PC-3 (cell line): ENCODE measurements at regions of chr18 and their contacts with region 1.

Region 1: DNA sequence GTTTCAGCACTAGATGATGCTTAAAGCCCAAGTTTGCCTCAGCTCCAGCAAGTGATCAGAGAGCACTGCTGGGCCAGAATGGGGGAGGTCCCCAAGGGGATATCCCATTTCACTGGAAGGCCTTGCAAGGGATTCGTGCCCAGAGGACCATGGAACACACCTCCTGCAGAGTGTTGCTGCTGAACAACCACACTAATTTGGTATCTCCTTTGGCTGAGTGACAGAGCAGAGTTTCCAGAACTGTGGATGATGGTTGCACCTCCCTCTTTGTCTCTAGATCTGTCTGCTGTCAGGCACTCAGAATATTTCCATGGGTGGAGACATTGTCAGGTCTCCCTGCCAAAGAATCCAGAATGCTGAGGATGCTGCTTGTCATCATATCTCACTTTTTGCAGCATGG is 484.8 kb upstream of the NETO1 start:
- DNase-seq: no peak
- ATAC-seq: peak; percentile 9; the same call in 1 of the 2 replicates
- H3K4me3 ChIP-seq: no peak overlapping the region
- H3K27ac ChIP-seq: no peak overlapping the region
- H3K4me1 ChIP-seq: 0 out of 2 replicates have a peak, but pooled peaks cover 5% of the 10 kb centered on the region
- H3K27me3 ChIP-seq: no peaks in the 10 kb centered on the region
- CTCF ChIP-seq: no peak

Region 2: GRCh38 chr18:72762515-72763122 is 589.9 kb before region 1 on chr18:
- CTCF ChIA-PET with region 1: no interaction called
- POLR2A ChIA-PET with region 1: no interaction called
- intact Hi-C with region 1: loop called (anchors 5 kb)
- DNase-seq: peak; percentile 84
- ATAC-seq: peak; percentile 61
- H3K4me3 ChIP-seq: no peak overlapping the region
- H3K27ac ChIP-seq: no peak overlapping the region
- H3K4me1 ChIP-seq: no peaks in the 10 kb centered on the region
- H3K27me3 ChIP-seq: no peaks in the 10 kb centered on the region
- CTCF ChIP-seq: peak; percentile 83

Region 3: DNA sequence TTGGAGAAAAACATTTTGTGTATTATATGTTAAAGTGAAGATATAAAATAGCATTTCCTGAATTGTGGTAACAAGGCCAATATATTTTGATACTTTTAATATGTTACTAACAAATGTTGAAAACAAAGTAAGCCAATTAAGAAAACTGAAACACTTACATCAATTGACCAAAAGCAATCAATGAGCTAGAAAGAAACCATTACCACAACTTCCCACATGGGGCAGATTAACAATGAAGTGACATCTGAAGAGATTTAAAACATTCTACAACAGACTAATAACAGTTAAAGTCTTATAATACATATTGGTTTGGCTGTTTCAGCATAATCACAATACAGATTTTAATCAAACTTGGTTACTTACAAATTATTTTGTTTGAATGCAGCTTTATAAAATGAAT is 202.3 kb before region 1 on chr18:
- CTCF ChIA-PET with region 1: no interaction called
- POLR2A ChIA-PET with region 1: no interaction called
- intact Hi-C with region 1: no loop called
- DNase-seq: peak; percentile 21
- ATAC-seq: no peak
- H3K4me3 ChIP-seq: no peak overlapping the region
- H3K27ac ChIP-seq: no peak overlapping the region
- H3K4me1 ChIP-seq: peaks cover 4% of the 10 kb centered on the region; the same call in 1 of the 2 replicates
- H3K27me3 ChIP-seq: no peaks in the 10 kb centered on the region
- CTCF ChIP-seq: peak; percentile 48

Region 4: DNA sequence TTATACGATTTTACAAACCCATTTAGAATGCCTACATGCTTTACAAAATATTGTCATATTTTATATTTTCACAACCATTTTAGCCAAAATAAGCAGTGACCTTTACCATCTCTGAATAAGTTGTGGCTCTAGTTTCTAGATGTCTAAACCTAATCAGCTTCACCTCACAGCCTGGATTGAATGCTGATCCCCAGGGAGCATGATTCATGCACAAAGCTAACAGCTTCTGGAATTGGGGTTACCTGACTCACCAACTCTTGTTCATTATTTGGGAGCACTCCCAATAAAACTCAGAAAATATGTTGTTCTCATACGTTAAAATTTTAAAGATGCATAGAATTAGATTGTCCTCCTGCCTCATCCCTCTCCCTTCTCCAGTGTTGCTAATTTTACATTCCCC is 126.9 kb after region 1 on chr18:
- CTCF ChIA-PET with region 1: no interaction called
- POLR2A ChIA-PET with region 1: no interaction called
- intact Hi-C with region 1: no loop called
- DNase-seq: peak; percentile 13
- ATAC-seq: peak; percentile 51; the same call in 1 of the 2 replicates
- H3K4me3 ChIP-seq: no peak overlapping the region
- H3K27ac ChIP-seq: no peak overlapping the region
- H3K4me1 ChIP-seq: no peaks in the 10 kb centered on the region
- H3K27me3 ChIP-seq: no peaks in the 10 kb centered on the region
- CTCF ChIP-seq: no peak

Region 5: DNA sequence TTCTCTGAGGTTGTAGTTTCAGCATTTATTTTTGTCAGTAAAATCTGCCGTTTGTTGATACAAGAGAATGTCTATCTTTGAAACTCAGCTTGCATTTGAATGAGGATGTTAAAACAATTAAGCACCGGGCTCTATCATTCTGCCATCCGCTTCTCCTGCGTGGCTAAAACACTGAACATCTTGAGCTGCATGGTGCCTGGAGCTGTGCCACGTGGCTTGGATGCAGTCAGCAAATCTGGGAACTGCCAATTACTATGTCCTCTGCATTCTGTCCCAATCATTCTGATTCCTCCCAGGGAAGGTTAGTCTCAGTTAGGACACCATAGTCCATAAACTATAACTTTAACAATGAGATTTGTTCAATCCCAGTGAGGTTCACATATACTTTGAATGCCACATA is 196.7 kb after region 1 on chr18:
- CTCF ChIA-PET with region 1: no interaction called
- POLR2A ChIA-PET with region 1: no interaction called
- intact Hi-C with region 1: loop called (anchors 5 kb)
- DNase-seq: no peak
- ATAC-seq: no peak
- H3K4me3 ChIP-seq: no peak overlapping the region
- H3K27ac ChIP-seq: no peak overlapping the region
- H3K4me1 ChIP-seq: peaks cover 11% of the 10 kb centered on the region
- H3K27me3 ChIP-seq: no peaks in the 10 kb centered on the region
- CTCF ChIP-seq: no peak

Region 6: GRCh38 chr18:73774811-73775509 is 422.4 kb after region 1 on chr18:
- CTCF ChIA-PET with region 1: no interaction called
- POLR2A ChIA-PET with region 1: no interaction called
- intact Hi-C with region 1: loop called (anchors 10 kb)
- DNase-seq: peak; percentile 80
- ATAC-seq: peak; percentile 99
- H3K4me3 ChIP-seq: peak overlapping the region; percentile 56
- H3K27ac ChIP-seq: no peak overlapping the region
- H3K4me1 ChIP-seq: peaks cover 14% of the 10 kb centered on the region
- H3K27me3 ChIP-seq: no peaks in the 10 kb centered on the region
- CTCF ChIP-seq: peak; percentile 68

Region 7: GRCh38 chr18:73842795-73843394 is 490.3 kb after region 1 on chr18:
- CTCF ChIA-PET with region 1: no interaction called
- POLR2A ChIA-PET with region 1: no interaction called
- intact Hi-C with region 1: loop called (anchors 10 kb)
- DNase-seq: peak; percentile 71
- ATAC-seq: peak; percentile 64
- H3K4me3 ChIP-seq: peak overlapping the region; percentile 55; the same call in 1 of the 2 replicates
- H3K27ac ChIP-seq: no peak overlapping the region
- H3K4me1 ChIP-seq: peaks cover 9% of the 10 kb centered on the region
- H3K27me3 ChIP-seq: no peaks in the 10 kb centered on the region
- CTCF ChIP-seq: peak; percentile 90

Region 8: GRCh38 chr18:73980289-73980979 is 627.9 kb after region 1 on chr18:
- CTCF ChIA-PET with region 1: no interaction called
- POLR2A ChIA-PET with region 1: no interaction called
- intact Hi-C with region 1: loop called (anchors 10 kb)
- DNase-seq: peak; percentile 75
- ATAC-seq: peak; percentile 80
- H3K4me3 ChIP-seq: no peak overlapping the region
- H3K27ac ChIP-seq: no peak overlapping the region
- H3K4me1 ChIP-seq: peaks cover 25% of the 10 kb centered on the region
- H3K27me3 ChIP-seq: no peaks in the 10 kb centered on the region
- CTCF ChIP-seq: peak; percentile 87